Activated T-helper 2 cell treated with anti-CD3 and anti-CD28 coated beads, Interferon-gamma antibody, Interleukin-2, Interleukin-4, amounts not matched to agents 10 μg/mL and 5 μg/mL and 100 μg/mL, durations not matched to agents 14 hours and 24 hours and 36 hours (primary cell): ENCODE measurements at regions of chr18 and their contacts with region 1.

Region 1: DNA sequence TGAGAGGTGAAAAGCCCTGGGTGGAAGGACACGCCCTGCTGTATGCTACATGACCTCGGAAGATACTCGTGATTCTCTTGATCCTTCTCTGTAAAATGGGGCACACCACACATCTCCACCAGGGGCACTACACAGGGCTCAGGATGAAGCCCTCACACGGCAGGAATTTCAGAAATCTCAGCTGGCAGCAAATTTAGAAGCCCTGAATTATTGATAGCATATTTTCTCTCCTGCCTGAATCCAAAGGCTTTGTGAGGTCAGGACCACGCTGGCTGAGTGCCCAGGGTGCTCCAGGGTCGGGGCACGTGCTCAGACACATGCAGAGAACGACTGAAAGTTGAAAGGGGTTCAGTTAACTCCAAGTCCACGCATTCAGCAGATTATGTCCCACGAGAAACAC is 42.1 kb upstream of the GALR1 start:
- DNase-seq: no peak
- H3K4me3 Mint-ChIP-seq: peak overlapping the region; percentile 39
- H3K27ac Mint-ChIP-seq: peak overlapping the region; percentile 42
- H3K4me1 Mint-ChIP-seq: peaks cover 39% of the 10 kb centered on the region
- H3K27me3 Mint-ChIP-seq: no peaks in the 10 kb centered on the region

Region 2: GRCh38 chr18:77000527-77000926 is 207.0 kb before region 1 on chr18:
- intact Hi-C with region 1: loop called (anchors 2 kb)
- DNase-seq: no peak
- H3K4me3 Mint-ChIP-seq: no peak overlapping the region
- H3K27ac Mint-ChIP-seq: no peak overlapping the region
- H3K4me1 Mint-ChIP-seq: peaks cover 32% of the 10 kb centered on the region
- H3K27me3 Mint-ChIP-seq: peaks cover 3% of the 10 kb centered on the region

Region 3: DNA sequence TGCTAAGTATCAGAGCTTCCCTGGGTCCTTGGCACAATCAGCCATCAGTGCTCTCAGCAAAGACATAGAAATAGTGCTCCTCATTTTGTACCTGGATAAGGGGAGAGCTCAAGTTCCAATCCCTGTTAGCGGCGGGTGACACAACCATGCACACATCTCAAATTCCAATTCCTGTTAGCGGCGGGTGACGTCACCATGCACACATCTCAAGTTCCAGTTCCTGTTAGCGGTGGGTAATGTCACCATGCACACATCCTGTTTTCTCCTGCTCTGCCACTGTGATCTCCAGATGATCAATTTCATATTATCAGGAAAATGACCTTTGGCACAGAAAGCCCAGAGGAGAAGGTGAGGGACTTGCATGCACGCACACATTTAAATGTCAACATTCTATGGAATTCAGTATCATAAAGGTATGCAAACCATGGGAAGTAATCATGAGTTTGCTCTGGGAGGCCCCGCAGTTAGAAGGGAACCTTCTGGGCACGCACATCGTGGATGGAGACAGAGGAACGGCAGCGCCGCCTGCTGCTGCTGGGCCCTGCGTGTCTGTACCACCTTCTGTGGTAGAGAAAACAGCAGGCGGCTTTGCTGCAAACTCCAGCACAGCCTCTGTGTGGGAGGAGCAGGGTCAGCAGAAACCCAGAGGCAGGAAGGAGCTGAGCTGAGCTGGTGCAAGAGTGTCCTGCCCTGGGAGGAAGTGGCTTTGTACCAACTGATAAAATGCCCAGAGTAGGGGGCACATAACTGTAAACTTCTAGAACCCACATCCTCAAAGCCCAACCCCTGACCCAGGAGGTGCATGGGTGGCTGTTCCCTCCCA is 152.7 kb before region 1 on chr18:
- intact Hi-C with region 1: loop called (anchors 5 kb)
- DNase-seq: peak; percentile 80
- H3K4me3 Mint-ChIP-seq: peak overlapping the region; percentile 83
- H3K27ac Mint-ChIP-seq: peak overlapping the region; percentile 96
- H3K4me1 Mint-ChIP-seq: peaks cover 62% of the 10 kb centered on the region
- H3K27me3 Mint-ChIP-seq: no peaks in the 10 kb centered on the region

Region 4: DNA sequence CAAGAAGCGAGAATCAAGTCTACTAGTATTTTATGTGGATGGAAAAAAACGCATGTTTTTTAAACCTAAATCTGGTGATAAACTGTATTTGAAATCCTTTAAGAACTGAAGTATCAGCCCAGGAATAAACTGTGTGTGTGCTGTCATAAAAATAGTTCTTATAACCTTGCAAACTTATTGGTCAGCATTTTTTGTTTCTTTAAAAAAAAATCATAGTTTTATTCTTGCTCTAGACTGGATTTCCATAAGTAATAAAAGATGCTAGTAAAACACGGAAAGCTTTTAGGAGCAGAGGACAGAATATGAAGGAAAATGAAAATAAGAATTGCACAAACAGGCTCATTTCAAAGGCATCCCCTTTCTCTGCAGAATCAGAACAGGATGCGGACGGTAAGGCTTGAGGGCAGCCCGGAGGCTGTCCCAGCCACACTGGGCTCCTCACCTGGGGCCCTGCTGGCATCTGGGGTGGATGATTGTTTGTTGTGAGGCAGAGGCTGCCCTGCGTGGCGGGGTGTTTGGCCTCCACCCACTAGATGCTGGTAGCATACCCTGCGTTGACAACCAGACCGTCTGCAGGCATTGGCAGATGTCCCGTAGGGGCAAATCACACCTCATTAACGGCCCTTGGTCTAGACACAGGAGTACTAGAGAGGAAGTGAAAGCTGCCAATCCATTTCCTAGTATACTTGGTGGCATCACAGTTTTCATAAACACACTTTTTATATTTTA is 127.4 kb before region 1 on chr18:
- intact Hi-C with region 1: no loop called
- DNase-seq: no peak
- H3K4me3 Mint-ChIP-seq: no peak overlapping the region
- H3K27ac Mint-ChIP-seq: no peak overlapping the region
- H3K4me1 Mint-ChIP-seq: peaks cover 41% of the 10 kb centered on the region
- H3K27me3 Mint-ChIP-seq: no peaks in the 10 kb centered on the region

Region 5: GRCh38 chr18:77132371-77133050 is 75.0 kb before region 1 on chr18 and contains the start of gene MBP:
- intact Hi-C with region 1: loop called (anchors 1 kb)
- DNase-seq: peak; percentile 55
- H3K4me3 Mint-ChIP-seq: peak within 1 kb of the TSS; percentile 98
- H3K27ac Mint-ChIP-seq: peak within 1 kb of the TSS; percentile 95
- H3K4me1 Mint-ChIP-seq: peaks cover 56% of the 10 kb centered on the region
- H3K27me3 Mint-ChIP-seq: no peaks in the 10 kb centered on the region
- total RNA-seq, gene MBP: 53.7 and 54.3 TPM in 2 replicates